ENCODE measurements at regions of chr5 and their contacts with region 1.

Region 1: GRCh38 chr5:142922223-142922952 is 152.2 kb downstream of the ARHGAP26 start:
- DNase-seq: peak in 4 of 5 donors; percentile 9 to 32 (median 20)
- H3K4me3 ChIP-seq: no peak overlapping the region
- H3K4me3 Mint-ChIP-seq: no peak overlapping the region
- H3K27ac ChIP-seq: no peak overlapping the region
- H3K27ac Mint-ChIP-seq: peak overlapping the region in 4 of 7 donors; percentile 19 to 60 (median 27)
- H3K4me1 ChIP-seq: peaks cover 10% of the 10 kb centered on the region
- H3K4me1 Mint-ChIP-seq: peaks cover 19 to 34% (median 28%) of the 10 kb centered on the region in 4 donors
- H3K27me3 ChIP-seq: no peaks in the 10 kb centered on the region
- H3K27me3 Mint-ChIP-seq: no peaks in the 10 kb centered on the region

Region 2: DNA sequence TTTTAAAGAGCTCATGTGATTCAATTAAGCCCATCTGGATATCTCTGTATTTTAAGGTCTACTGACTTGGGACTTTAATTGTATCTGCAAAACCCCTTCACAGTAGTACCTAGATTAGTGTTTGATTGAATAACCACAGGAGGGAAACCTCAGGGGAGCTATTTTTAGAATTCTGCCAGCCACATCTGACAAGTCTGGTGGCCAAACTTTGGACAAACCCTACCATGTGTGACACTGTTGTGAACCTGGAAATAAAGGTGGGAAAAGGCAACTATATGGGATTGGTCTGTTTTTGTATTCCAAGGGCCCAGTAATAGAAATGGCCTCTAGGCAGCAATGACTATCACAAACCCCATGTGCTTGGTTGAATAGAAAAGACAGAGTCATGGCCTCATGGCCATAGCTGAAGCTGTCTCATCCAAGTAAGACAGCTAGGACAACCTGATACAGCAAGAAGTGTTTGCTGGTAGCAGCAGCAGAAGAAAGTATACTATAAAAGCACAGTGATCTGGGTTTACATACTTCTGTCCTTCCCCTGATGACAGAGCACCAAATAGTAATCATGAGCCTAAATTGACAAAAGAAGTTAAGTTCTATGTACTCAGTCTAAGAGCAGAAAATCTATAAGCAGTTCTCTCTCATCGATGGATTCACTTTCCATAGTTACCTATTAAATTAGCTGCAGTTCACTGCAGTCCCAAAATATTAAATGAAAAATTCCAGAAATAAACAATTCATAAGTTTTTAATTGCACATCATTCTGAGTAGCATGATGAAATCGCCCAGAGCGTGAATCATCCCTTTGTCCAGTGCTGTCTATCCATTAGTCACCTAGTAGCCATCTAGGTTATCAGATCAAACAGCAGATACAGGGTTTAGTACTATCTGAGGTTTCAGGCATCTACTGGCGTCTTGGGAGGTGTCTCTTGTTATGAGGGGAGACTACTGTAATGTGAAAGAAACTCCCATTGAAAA is 37.6 kb after region 1 on chr5:
- CTCF ChIA-PET with region 1: interaction called, 19 read pairs
- POLR2A ChIA-PET with region 1: no interaction called
- intact Hi-C with region 1: loop called (anchors 1 kb)
- DNase-seq: no peak
- H3K4me3 ChIP-seq: no peak overlapping the region
- H3K4me3 Mint-ChIP-seq: no peak overlapping the region
- H3K27ac ChIP-seq: no peak overlapping the region
- H3K27ac Mint-ChIP-seq: peak overlapping the region in 3 of 7 donors; percentile 12 to 49 (median 40)
- H3K4me1 ChIP-seq: peaks cover 9% of the 10 kb centered on the region
- H3K4me1 Mint-ChIP-seq: peaks cover 7 to 19% (median 15%) of the 10 kb centered on the region in 4 donors
- H3K27me3 ChIP-seq: no peaks in the 10 kb centered on the region
- H3K27me3 Mint-ChIP-seq: no peaks in the 10 kb centered on the region

Region 3: DNA sequence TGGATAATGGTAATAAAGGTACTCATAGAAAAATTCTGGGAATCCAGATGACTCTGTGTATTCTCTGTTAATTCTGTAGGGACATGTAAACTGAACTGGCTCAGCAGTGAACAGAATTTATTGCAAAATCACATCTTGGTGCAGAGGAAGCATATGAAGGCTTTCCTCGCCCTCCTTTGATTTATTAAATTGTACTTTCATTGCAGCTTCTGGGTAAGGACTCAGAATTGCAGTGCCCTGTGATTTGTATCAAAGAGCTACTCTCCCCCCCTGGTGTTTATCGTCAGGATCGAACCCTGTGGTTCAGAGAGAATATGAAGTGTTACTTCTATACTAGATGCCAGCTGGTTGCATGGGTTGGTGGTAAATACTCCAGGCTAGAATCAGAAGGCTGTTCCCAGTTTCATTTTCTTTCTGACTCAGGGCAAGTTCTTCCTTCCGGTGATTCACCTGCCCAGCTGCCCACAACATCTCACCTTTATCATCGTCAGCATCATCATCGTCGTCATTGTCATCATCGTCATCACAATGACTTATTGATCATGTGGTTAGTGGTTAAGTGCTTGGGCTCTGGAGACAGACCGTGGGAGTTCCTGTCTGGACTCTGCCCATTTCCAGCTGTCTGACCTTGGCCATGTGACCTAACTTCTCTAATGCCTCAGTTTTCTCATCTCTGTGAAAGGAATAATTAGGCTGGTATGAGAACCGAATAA is 86.6 kb after region 1 on chr5:
- CTCF ChIA-PET with region 1: interaction called, 39 read pairs
- POLR2A ChIA-PET with region 1: interaction called, 16 read pairs
- intact Hi-C with region 1: loop called (anchors 1 kb)
- DNase-seq: peak; percentile 83 to 96 (median 87)
- H3K4me3 ChIP-seq: no peak overlapping the region
- H3K4me3 Mint-ChIP-seq: peak overlapping the region; percentile 23 to 71 (median 68)
- H3K27ac ChIP-seq: peak overlapping the region; percentile 63
- H3K27ac Mint-ChIP-seq: peak overlapping the region; percentile 84 to 97 (median 94)
- H3K4me1 ChIP-seq: peaks cover 49% of the 10 kb centered on the region
- H3K4me1 Mint-ChIP-seq: peaks cover 31 to 56% (median 40%) of the 10 kb centered on the region in 4 donors
- H3K27me3 ChIP-seq: no peaks in the 10 kb centered on the region
- H3K27me3 Mint-ChIP-seq: no peaks in the 10 kb centered on the region

Region 4: GRCh38 chr5:144142139-144142823 is 1219.9 kb after region 1 on chr5:
- CTCF ChIA-PET with region 1: no interaction called
- POLR2A ChIA-PET with region 1: no interaction called
- intact Hi-C with region 1: loop called (anchors 5 kb)
- DNase-seq: peak in 4 of 5 donors; percentile 14 to 26 (median 18)
- H3K4me3 ChIP-seq: no peak overlapping the region
- H3K4me3 Mint-ChIP-seq: peak overlapping the region in 1 of 8 donors; percentile 19
- H3K27ac ChIP-seq: no peak overlapping the region
- H3K27ac Mint-ChIP-seq: no peak overlapping the region
- H3K4me1 ChIP-seq: no peaks in the 10 kb centered on the region
- H3K4me1 Mint-ChIP-seq: peaks cover 0 to 3% (median 2%) of the 10 kb centered on the region in 4 donors
- H3K27me3 ChIP-seq: no peaks in the 10 kb centered on the region
- H3K27me3 Mint-ChIP-seq: peaks cover 4% of the 10 kb centered on the region in 2 donors

Measured in CD4-positive, alpha-beta memory T cell (primary cell).